GM12878 (cell line): ENCODE measurements at regions of chr19 and their contacts with region 1.

Region 1: DNA sequence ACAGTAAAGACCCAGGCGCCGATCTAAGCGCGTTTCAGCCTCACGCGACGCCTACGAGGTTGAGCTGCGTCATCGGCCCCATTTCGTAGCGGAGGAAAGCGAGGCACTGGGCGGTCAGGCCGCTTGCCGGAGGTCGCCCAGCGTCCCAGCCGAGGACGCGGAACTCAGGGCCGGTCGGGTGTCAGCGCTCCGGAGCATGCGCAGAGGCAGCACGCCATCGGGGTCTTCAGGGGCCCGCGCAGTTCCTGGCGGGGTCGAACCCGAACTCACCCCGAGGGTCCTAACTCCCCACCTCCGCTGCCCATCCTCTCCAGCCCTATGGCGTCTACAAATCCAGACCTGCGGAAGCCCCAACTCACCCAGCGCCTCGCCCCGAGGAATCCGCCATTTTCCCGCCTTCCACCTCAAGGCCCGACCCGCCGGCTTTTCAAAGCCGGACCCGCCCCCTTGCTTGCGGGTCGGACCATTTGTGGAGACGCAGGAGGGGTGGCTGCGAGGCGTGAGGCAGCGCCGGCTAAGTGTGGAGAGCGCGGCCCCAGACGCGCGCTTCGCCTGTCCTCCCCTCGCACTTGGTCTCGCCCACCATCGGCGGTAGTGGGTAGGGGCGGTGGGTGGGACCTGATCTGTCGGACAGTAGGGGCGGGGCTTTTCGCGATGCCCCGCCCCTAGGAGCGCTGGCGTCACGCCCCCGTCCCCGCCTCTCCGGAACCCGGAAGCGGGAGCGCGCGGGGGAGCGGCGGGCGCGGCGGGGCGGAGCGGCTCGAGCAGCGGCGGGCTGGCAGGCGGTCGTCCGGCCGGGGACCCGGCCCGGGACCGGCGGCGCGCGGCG is at the starts of genes HAUS8 and MYO9B:
- DNase-seq: peak; percentile 95
- ATAC-seq: peak; percentile 74
- H3K4me3 ChIP-seq: peak within 1 kb of the TSS; percentile 98
- H3K27ac ChIP-seq: peak within 1 kb of the TSS; percentile 87
- H3K4me1 ChIP-seq: peaks cover 29% of the 10 kb centered on the region
- H3K27me3 ChIP-seq: no peaks in the 10 kb centered on the region
- CTCF ChIP-seq: no peak
- EP300 ChIP-seq: 0 out of 4 replicates have a peak, but pooled peaks of 1 of the 2 experiments have one; percentile 17
- POLR2A ChIP-seq: peak; percentile 85
- RAD21 ChIP-seq: no peak
- polyA plus RNA-seq, gene HAUS8: 24.2 to 35.7 TPM
- polyA plus RNA-seq, gene MYO9B: 5.4 to 11.1 TPM

Region 2: DNA sequence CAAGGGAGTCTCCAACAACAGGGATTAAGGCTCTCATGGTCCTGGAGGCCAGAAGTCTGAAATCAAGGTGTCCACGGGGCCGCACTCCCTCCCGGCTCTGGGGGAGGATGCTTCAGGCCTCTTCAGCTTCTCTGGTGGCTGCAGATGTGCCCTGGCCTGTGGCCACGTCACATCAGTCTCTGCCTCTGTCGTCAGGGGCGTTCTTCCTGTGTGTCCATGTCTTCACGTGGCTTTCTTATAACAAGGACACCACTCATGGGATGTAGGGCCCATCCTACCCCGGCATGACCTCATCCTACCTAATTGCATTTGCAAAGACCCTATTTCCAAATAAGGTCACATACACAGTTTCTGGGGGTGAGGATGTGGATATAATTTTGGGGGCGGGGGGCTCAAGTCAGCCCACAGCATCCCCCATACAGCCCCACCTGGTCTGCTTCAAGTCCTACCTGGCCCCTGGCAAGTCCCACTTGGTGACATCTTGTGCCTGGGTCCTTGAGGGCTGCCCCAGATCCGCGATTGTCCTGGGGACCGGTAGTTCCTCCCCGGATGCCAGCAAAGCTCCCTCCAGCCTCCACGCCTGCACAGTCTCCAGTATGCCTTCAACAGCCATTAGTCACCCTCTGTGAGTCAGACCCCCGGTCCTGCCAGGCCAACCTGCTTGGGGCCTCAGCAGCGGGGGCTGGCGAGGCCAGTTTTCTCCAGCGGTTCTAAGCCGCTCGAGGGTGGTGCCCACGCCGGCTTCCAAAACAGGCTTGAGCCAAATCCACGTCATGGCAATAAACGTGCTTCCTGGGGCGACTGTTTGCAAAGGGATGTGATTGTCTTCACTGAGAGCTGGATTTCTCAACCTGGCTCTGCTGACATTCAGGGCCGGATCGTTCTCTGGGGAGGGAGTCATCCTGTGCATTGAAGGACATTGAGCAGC is 32.5 kb after region 1 on chr19:
- CTCF ChIA-PET with region 1: interaction called, 6 read pairs
- POLR2A ChIA-PET with region 1: interaction called, 9 read pairs
- RAD21 ChIA-PET with region 1: interaction called, 7 read pairs
- SMC1A ChIA-PET with region 1: interaction called, 8 read pairs
- in situ Hi-C with region 1: no loop called
- intact Hi-C with region 1: loop called (anchors 2 kb)
- DNase-seq: no peak
- ATAC-seq: no peak
- H3K4me3 ChIP-seq: no peak overlapping the region
- H3K27ac ChIP-seq: peak overlapping the region; percentile 61
- H3K4me1 ChIP-seq: peaks cover 79% of the 10 kb centered on the region
- H3K27me3 ChIP-seq: no peaks in the 10 kb centered on the region
- CTCF ChIP-seq: no peak
- EP300 ChIP-seq: no peak
- POLR2A ChIP-seq: no peak; the same call in 1 of the 2 replicates
- RAD21 ChIP-seq: no peak

Region 3: GRCh38 chr19:17135001-17135853 is 60.0 kb after region 1 on chr19:
- CTCF ChIA-PET with region 1: interaction called, 5 read pairs
- POLR2A ChIA-PET with region 1: interaction called, 7 read pairs
- RAD21 ChIA-PET with region 1: no interaction called
- SMC1A ChIA-PET with region 1: interaction called, 11 read pairs
- in situ Hi-C with region 1: no loop called
- intact Hi-C with region 1: loop called (anchors 2 kb)
- DNase-seq: peak; percentile 61
- ATAC-seq: peak; percentile 87
- H3K4me3 ChIP-seq: 0 out of 2 replicates have a peak overlapping the region, but pooled peaks have one; percentile 21
- H3K27ac ChIP-seq: peak overlapping the region; percentile 84
- H3K4me1 ChIP-seq: peaks cover 39% of the 10 kb centered on the region
- H3K27me3 ChIP-seq: no peaks in the 10 kb centered on the region
- CTCF ChIP-seq: peak; percentile 23 to 28 (median 26); a peak in 4 of 6 replicates
- EP300 ChIP-seq: peak in 1 of 2 experiments; percentile 47; a peak in 3 of 4 replicates
- POLR2A ChIP-seq: peak; percentile 58
- RAD21 ChIP-seq: peak; percentile 45; the same call in 1 of the 2 replicates

Region 4: GRCh38 chr19:17235618-17236377 is 160.5 kb after region 1 on chr19:
- CTCF ChIA-PET with region 1: interaction called, 6 read pairs
- POLR2A ChIA-PET with region 1: interaction called, 4 read pairs
- RAD21 ChIA-PET with region 1: interaction called, 21 read pairs
- SMC1A ChIA-PET with region 1: interaction called, 3 read pairs
- in situ Hi-C with region 1: no loop called
- intact Hi-C with region 1: loop called (anchors 2 kb)
- DNase-seq: no peak
- ATAC-seq: peak; percentile 93
- H3K4me3 ChIP-seq: peak overlapping the region; percentile 89
- H3K27ac ChIP-seq: peak overlapping the region; percentile 50
- H3K4me1 ChIP-seq: 0 out of 2 replicates have a peak, but pooled peaks cover 4% of the 10 kb centered on the region
- H3K27me3 ChIP-seq: no peaks in the 10 kb centered on the region
- CTCF ChIP-seq: peak; percentile 45 to 90 (median 67); a peak in 5 of 6 replicates
- EP300 ChIP-seq: no peak
- POLR2A ChIP-seq: peak; percentile 39
- RAD21 ChIP-seq: peak; percentile 39; the same call in 1 of the 2 replicates

Region 5: DNA sequence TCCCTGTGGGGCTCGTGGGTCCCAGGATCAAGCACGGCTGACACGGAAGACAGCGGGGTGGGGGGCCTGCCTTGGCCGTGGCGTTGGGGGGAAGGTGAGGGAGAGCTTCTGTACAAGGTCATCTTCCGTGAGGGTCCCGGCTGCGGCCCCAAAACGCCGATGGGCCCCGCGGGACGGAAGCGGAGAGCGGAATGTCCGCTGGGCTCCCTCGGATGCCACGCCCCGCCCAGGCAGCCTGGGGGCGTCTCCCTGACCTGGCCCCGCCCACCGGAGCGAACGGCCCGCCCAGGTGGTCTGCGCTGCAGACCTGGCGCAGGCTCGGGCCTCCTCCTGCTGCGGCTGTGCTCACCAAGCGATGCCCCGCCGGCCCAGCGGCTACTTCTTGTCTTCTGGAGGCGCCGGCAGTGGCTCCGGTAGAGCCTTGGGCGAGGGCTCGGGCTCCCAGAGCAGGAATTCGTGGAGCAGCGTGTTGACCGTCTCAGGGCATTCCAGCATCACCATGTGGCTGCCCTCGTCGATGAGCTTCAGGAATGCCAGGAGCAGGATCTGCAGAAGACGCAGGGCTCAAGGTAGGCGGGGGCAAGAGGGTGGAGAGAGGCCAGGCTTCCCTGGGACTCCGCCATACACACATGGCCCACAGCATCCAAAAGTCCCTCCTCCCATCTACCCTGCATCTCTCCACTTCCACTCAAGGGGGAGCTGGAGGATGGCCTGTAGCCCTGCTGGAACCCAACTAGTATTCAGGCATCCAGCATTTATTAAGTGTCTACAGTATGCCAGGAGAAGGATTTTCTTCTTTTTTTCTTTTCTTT is 217.2 kb after region 1 on chr19:
- CTCF ChIA-PET with region 1: no interaction called
- POLR2A ChIA-PET with region 1: no interaction called
- RAD21 ChIA-PET with region 1: no interaction called
- SMC1A ChIA-PET with region 1: no interaction called
- in situ Hi-C with region 1: loop called (anchors 5 kb)
- intact Hi-C with region 1: no loop called
- DNase-seq: peak; percentile 46
- ATAC-seq: peak; percentile 97
- H3K4me3 ChIP-seq: peak overlapping the region; percentile 86
- H3K27ac ChIP-seq: peak overlapping the region; percentile 35
- H3K4me1 ChIP-seq: peaks cover 4% of the 10 kb centered on the region; the same call in 1 of the 2 replicates
- H3K27me3 ChIP-seq: no peaks in the 10 kb centered on the region
- CTCF ChIP-seq: peak; percentile 84 to 95 (median 85)
- EP300 ChIP-seq: no peak
- POLR2A ChIP-seq: peak; percentile 82
- RAD21 ChIP-seq: peak; percentile 94